ENCODE measurements at regions of chr7 and their contacts with region 1.

Region 1: DNA sequence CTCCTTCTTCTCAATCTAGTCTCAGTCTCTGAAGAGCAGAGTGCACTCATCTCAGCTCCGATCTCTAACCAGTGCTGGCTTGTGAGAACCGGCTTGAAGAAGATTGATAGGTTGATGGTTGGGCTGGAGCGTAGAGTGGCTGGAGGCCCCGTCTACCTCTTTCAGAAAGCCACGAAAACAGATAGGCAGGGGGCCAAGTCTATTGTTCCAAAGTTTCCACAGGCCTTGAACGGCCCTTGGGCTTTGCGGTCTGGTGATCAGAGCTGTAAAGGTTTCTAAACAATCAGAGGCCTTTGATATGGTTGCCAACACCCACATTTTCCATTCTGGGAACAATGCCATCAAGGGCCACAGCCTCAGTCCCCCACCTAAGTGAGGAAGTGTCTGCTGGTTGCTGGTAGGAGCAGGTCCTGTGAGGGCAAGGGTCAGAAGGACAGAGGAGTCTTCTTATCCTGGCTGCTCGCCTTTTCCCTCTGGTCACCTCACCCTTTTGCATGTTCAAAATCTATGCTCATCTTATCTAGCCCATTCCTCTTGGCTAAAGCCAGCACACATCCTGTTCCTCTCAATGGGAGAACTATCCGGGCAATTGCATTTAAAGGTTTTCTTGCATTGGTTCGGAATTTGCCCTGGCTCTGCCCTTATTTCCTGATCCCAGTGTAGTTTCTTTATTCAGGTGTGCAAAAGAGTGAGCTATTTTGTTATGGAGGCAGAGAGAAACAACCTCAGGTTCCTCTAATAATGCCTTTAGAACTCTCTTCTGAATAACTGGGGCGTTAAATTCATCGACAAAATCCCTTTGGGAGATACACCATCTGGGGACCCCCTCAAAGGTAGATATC is 70.3 kb upstream of the KMT2E start:
- DNase-seq: peak; percentile 36 to 91 (median 74)
- ATAC-seq: peak; percentile 41 to 59
- H3K4me3 Mint-ChIP-seq: peak overlapping the region; percentile 74 to 96 (median 88)
- H3K27ac Mint-ChIP-seq: peak overlapping the region; percentile 98 to 100 (median 100)
- H3K4me1 Mint-ChIP-seq: peaks cover 22 to 79% (median 62%) of the 10 kb centered on the region in 4 donors
- H3K27me3 Mint-ChIP-seq: peaks cover 0 to 4% (median 0%) of the 10 kb centered on the region in 5 donors

Region 2: GRCh38 chr7:104983578-104984539 is 40.1 kb after region 1 on chr7:
- POLR2A ChIA-PET with region 1: interaction called, 30 read pairs
- DNase-seq: peak; percentile 71 to 90 (median 80)
- ATAC-seq: peak; percentile 85 to 88
- H3K4me3 Mint-ChIP-seq: peak overlapping the region; percentile 96 to 100 (median 100)
- H3K27ac Mint-ChIP-seq: peak overlapping the region in 9 of 10 donors; percentile 99 to 100 (median 100)
- H3K4me1 Mint-ChIP-seq: peaks cover 19 to 73% (median 54%) of the 10 kb centered on the region in 4 donors
- H3K27me3 Mint-ChIP-seq: peaks cover 0 to 1% (median 0%) of the 10 kb centered on the region in 5 donors